ENCODE measurements at regions of chr1 and their contacts with region 1.

Region 1: DNA sequence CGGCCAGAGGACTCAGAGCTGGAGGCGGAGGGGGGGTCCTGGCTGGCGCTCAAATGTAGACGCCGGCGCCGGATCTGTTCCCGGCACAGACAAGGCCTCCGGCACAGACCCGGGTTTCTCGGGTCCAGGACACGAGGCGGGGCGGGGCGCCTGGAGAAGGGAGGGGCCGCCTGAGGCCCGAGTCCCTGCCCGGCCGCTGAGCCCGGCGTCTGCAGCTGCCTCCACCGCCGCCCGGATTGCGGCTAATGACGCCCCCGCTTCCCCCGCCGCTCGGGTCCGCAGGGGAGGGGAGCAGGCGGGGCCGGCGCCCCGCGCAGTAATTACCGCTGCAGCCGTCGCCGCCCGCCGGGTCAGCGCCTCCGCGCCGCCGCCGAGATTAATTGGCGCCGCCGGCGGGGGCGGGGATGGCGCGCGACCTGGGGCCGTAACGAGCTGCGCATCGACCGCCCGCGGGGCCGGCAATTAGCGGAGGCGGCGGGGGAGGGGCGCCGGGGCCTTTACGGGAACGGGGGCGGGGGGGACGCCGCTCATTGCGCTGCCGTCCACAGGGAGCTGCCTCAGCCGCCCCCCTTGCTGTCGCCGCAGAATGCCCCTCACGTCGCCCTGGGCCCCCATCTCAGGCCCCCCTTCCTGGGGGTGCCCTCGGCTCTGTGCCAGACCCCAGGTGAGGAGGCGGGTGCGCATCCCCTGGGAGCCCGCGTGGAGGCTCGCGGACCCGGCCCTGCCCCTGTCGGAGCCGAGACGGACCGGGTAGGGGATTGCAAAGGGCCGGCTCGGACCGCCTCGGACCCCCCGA is 17.3 kb downstream of the NOC2L start:
- H3K4me3 ChIP-seq: peak overlapping the region; percentile 46
- H3K27ac ChIP-seq: peak overlapping the region; percentile 98
- H3K4me1 ChIP-seq: peaks cover 46% of the 10 kb centered on the region
- CTCF ChIP-seq: 0 out of 2 replicates have a peak, but pooled peaks have one; percentile 22

Region 2: DNA sequence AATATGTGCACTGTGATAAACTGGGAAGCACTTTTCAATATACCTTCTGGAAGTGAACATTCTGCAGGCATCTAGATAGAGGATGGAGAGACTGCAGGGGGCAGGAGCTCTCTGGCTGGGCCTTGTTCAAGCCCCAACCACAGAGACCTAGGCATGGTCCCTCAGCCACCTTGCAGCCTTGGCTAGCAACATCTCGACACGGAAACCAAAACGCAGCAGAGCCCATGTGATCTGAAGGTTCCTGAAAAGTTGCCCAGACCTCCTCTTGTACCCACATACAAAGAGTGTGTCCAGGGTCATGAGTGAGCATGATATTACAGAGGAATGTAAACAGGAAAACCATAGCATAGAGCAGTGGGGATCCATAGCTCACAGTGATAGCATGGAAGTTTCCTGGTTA is 51.1 kb before region 1 on chr1:
- CTCF ChIA-PET with region 1: no interaction called
- POLR2A ChIA-PET with region 1: no interaction called
- H3K4me3 ChIP-seq: no peak overlapping the region
- H3K27ac ChIP-seq: no peak overlapping the region
- H3K4me1 ChIP-seq: no peaks in the 10 kb centered on the region
- CTCF ChIP-seq: no peak

Region 3: DNA sequence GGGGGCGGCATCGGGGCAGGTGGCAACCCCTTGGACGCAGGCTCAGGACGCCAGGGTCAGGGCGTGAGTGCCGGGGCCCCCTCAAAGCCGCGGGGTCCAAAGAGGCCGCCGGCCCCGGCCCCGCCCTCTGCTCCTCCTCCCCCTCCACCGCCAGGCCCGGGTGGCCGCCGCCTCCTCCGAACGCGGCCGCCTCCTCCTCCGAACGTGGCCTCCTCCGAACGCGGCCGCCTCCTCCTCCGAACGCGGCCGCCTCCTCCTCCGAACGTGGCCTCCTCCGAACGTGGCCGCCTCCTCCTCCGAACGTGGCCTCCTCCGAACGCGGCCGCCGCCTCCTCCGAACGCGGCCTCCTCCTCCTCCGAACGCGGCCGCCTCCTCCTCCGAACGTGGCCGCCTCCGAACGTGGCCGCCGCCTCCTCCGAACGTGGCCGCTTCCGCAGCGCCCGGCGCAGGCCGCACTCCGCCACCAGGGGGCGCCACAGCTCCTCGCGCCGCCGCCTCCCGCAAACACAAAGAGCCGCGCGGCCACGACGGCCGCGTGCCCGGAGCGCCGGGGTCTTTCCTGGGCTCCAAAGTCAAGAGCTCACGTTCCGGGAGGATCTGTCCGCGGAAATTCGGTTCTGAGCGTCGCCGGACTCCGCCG is 37.4 kb before region 1 on chr1:
- CTCF ChIA-PET with region 1: interaction called, 15 read pairs
- POLR2A ChIA-PET with region 1: interaction called, 47 read pairs
- H3K4me3 ChIP-seq: peak overlapping the region; percentile 22
- H3K27ac ChIP-seq: peak overlapping the region; percentile 19; the same call in 1 of the 2 replicates
- H3K4me1 ChIP-seq: peaks cover 5% of the 10 kb centered on the region; the same call in 1 of the 2 replicates
- CTCF ChIP-seq: peak; percentile 62; the same call in 1 of the 2 replicates

Region 4: GRCh38 chr1:913491-914130 is 28.2 kb before region 1 on chr1:
- CTCF ChIA-PET with region 1: interaction called, 10 read pairs
- POLR2A ChIA-PET with region 1: interaction called, 106 read pairs
- H3K4me3 ChIP-seq: no peak overlapping the region
- H3K27ac ChIP-seq: no peak overlapping the region
- H3K4me1 ChIP-seq: peaks cover 36% of the 10 kb centered on the region
- CTCF ChIP-seq: no peak

Region 5: GRCh38 chr1:921011-921837 is 20.6 kb before region 1 on chr1:
- CTCF ChIA-PET with region 1: interaction called, 17 read pairs
- POLR2A ChIA-PET with region 1: interaction called, 106 read pairs
- H3K4me3 ChIP-seq: no peak overlapping the region
- H3K27ac ChIP-seq: peak overlapping the region; percentile 63
- H3K4me1 ChIP-seq: peaks cover 27% of the 10 kb centered on the region
- CTCF ChIP-seq: peak; percentile 86

Region 6: DNA sequence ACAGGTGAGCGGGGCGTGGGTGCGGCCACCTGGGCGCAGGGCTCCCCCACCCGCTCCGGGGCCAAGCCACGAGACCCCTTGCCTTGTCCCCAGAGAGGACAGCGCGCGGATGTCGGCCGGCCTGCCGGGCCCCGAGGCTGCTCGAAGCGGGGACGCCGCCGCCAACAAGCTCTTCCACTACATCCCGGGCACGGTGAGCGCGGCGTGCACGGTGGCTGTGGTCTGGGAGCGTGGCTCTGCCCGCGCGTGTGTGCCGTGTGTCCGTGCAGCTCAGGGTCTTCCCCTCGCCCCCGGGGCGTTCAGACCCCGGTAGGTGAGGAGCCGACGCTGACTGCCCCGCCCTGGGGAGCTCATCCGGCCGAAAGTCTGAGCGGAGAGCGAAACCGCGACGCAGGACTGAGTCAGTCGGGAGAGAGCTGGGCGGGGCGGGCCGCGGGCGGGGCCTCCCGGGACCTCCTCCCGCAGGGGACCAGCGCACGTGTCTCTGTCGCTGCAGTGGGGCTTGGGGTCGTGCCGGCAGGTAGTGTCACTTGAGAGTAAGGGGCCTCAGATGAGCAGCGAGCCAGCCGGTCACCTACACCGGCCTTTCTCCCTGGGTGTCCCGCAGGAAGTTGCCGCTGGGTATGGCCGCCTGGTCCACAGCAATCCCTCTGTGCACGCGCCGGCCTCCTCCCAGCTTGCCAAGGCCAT is 25.0 kb after region 1 on chr1:
- CTCF ChIA-PET with region 1: interaction called, 4 read pairs
- POLR2A ChIA-PET with region 1: interaction called, 28 read pairs
- H3K4me3 ChIP-seq: peak overlapping the region; percentile 51
- H3K27ac ChIP-seq: peak overlapping the region; percentile 75
- H3K4me1 ChIP-seq: peaks cover 5% of the 10 kb centered on the region
- CTCF ChIP-seq: no peak

Region 7: DNA sequence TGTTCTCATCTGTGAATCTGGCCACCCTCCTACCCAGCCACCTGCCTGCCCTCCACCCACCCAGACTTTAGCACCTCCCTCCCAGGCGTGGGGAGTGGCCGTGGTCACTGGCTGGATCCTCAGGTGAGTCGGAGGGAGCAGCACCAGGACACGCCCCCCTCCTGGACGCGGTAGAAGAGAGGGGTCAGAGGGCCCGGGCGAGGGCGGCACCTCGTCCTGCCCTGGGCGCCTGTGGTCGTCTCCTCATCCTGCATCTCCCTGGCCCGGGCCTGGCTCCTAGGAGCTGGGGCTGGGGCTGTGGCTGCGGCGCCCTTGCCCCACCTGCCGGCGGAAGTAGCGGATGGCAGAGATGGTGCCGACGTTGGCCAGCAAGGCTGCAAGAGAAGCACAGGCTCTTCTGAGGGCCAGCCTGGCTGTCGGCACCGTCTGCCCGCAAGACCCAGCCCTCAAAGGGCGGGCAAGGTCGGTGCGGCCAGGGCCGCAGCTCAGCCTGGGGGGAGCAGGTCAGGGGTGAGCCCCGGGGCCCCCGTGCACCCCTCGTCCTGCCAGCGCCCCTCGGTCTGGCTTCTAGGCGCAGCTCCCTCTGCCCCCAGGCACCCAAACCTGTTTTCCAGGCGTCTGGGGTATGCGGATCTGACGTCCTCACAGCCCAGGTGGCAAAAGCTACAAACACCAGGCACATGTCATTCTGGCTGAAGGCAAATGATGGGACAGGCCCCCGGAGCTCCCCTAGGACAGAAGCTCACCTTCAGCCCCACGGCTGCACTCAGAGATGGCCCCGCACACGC is 34.3 kb after region 1 on chr1:
- CTCF ChIA-PET with region 1: no interaction called
- POLR2A ChIA-PET with region 1: interaction called, 12 read pairs
- H3K4me3 ChIP-seq: peak overlapping the region; percentile 25
- H3K27ac ChIP-seq: peak overlapping the region; percentile 50; the same call in 1 of the 2 replicates
- H3K4me1 ChIP-seq: peaks cover 3% of the 10 kb centered on the region; the same call in 1 of the 2 replicates
- CTCF ChIP-seq: peak; percentile 96

Region 8: DNA sequence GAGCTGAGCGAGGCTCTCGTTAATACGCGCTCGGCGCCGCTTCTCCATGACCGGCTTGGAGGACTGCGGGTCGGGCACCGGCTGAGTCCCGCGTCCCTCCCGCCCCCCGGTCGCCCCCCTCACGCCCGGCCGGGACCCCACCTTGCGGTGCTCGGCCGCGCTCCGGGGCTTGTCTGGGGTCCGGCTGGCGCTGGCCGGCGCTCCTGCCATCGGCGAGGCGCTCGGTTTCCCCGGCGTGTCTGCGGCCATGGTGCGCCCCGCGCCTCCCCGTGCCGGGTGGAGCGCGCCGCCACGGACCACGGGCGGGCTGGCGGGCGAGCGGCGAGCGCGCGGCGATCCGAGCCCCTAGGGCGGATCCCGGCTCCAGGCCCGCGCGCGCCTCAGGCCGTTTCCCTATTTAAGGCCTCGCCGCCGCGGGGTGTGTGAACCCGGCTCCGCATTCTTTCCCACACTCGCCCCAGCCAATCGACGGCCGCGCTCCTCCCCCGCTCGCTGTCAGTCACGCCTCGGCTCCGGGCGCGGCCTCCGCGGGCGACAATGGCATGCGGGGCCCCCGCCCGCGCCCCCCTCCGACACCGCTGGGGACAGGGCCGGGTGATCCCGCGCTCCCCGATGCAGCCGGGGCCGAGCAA is 58.1 kb after region 1 on chr1 and contains the start of gene HES4:
- CTCF ChIA-PET with region 1: interaction called, 7 read pairs
- POLR2A ChIA-PET with region 1: interaction called, 14 read pairs
- H3K4me3 ChIP-seq: peak within 1 kb of the TSS; percentile 74
- H3K27ac ChIP-seq: peak within 1 kb of the TSS; percentile 97
- H3K4me1 ChIP-seq: 0 out of 2 replicates have a peak, but pooled peaks cover 3% of the 10 kb centered on the region
- CTCF ChIP-seq: no peak

Region 9: DNA sequence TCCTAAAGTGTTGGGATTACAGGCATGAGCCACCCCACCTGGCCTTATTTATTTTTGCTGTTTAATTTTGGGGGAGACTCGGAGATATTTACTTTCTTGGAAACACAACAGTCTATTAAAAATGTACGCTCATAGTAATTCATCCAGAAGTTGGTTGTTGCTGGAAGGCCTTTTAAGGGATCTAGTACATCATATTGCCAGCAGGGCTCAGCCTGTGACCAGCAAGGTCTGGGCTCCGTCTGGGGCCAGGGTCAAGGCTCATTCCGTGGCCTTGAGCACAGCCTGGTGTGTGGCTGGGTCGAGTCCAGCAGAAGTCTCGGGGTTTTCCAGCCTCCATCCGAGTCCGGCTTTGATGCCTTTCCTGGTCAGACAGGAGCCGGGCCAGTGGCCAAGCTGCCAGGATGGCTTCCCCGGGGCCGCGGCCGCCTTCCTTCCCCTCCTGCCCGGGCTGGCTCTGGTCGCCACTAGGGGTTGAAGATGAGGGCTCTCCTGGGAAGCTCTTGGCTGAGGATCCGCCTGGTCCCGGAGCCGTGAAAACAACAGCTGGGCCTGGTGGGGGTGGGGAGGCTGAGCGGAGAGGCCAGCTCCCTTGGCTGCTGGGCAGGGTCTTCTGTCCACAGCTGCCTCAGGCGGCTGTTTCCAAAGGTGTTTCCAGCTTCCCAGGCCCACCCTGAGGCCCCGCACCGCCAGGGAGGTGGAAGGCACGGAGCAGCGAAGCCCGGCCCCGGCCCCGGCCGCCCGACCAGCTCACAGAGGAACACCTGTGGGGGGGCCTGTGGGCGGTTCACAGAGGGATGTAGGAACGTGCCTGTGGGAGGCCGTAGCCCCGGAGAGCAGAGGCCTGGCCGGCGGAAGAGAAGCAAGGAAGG is 488.6 kb after region 1 on chr1:
- CTCF ChIA-PET with region 1: no interaction called
- POLR2A ChIA-PET with region 1: no interaction called
- H3K4me3 ChIP-seq: no peak overlapping the region
- H3K27ac ChIP-seq: no peak overlapping the region
- H3K4me1 ChIP-seq: no peaks in the 10 kb centered on the region
- CTCF ChIP-seq: no peak

Region 10: DNA sequence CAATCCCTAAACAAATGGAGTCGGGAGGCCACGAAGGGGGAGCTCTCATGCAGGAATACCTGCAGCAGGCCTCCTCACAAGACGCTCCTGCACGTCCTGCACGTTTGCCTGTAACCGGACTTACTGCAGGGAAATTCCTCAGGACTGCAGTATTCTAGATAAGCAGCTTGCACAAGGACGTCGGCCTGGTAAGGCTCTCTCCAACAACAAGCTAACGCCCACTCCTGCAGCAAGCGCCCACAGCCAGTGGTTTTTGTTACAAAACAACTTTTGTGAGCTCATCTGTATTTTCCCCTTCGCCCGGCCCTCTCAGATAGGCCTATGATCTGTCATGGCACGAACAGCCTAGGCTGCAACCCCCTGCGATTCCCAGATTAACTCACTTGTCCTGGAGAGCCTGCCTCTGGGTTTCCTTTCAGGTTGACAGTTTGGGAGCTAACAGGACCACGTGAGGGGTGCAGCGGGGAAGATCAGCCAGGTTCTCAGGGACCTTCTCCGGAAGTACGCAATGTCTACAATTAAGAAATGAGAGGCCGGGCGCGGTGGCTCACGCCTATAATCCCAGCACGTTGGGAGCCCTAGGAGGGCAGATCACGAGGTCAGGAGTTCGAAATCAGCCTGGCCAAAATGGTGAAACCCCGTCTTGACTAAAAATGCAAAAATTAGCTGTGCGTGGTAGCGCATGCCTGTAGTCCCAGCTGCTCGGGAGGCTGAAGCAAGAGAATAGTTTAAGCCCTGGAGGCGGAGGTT is 672.6 kb after region 1 on chr1:
- CTCF ChIA-PET with region 1: no interaction called
- POLR2A ChIA-PET with region 1: no interaction called
- H3K4me3 ChIP-seq: peak overlapping the region; percentile 100
- H3K27ac ChIP-seq: peak overlapping the region; percentile 40; the same call in 1 of the 2 replicates
- H3K4me1 ChIP-seq: 0 out of 2 replicates have a peak, but pooled peaks cover 3% of the 10 kb centered on the region
- CTCF ChIP-seq: 0 out of 2 replicates have a peak, but pooled peaks have one; percentile 27